Ascending aorta (tissue), 2 donors: ENCODE measurements at regions of chr5 and their contacts with region 1.

Region 1: GRCh38 chr5:173887610-173888472 is at the start of gene CPEB4:
- DNase-seq: peak; percentile 98 to 100
- H3K4me3 ChIP-seq: peak within 1 kb of the TSS; percentile 78 to 86
- H3K27ac ChIP-seq: peak within 1 kb of the TSS; percentile 86 to 90
- H3K4me1 ChIP-seq: no peaks in the 10 kb centered on the region
- H3K27me3 ChIP-seq: no peaks in the 10 kb centered on the region
- CTCF ChIP-seq: no peak
- total RNA-seq, gene CPEB4: 37.4 TPM

Region 2: GRCh38 chr5:173764321-173765029 is 123.4 kb before region 1 on chr5:
- intact Hi-C with region 1: loop called (anchors 2 kb)
- DNase-seq: peak; percentile 70 to 90
- H3K4me3 ChIP-seq: no peak overlapping the region
- H3K27ac ChIP-seq: peak overlapping the region; percentile 27 to 64
- H3K4me1 ChIP-seq: peaks cover 0 to 5% of the 10 kb centered on the region in 2 donors
- H3K27me3 ChIP-seq: no peaks in the 10 kb centered on the region
- CTCF ChIP-seq: no peak

Region 3: DNA sequence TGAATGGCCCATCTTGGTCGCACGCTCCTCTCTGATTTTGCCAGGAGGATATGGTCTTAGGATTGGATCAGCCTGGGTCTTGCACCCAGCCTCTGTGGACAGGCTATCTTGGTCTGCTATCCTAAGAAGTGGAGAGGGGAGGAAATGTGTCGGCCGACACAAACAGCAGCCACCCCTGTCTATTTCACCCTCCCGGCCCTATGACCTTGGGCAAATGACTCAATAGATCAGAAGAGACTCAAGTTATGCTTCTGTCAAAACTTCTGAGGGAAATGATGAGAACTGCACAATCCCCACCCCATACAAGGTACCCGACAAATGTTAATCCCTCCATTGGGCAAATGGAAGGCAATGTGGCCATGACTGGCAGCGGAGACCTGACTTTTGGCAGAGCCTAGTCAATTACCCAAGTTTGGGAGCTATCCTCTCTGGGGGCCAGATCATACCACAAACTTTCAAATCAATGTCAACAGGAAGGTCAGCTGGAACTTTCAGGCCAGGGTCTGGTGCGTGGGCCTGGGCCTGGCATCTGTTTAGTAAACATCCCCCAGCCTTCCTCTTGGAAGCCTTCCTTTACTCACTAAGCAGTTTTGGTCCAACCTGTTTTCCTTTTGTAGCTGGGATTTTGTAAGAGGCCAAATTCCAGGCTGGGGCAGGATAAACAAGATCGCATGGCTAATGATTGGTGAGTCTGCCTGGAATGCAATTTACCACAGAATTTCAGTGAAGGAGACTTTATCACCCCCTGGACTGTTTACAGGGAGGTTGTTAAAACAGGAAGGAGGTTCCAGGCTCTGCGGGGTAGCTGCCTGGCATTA is 63.9 kb before region 1 on chr5:
- intact Hi-C with region 1: loop called (anchors 5 kb)
- DNase-seq: no peak
- H3K4me3 ChIP-seq: no peak overlapping the region
- H3K27ac ChIP-seq: peak overlapping the region; percentile 61 to 70
- H3K4me1 ChIP-seq: peaks cover 3 to 14% of the 10 kb centered on the region in 2 donors
- H3K27me3 ChIP-seq: no peaks in the 10 kb centered on the region
- CTCF ChIP-seq: no peak

Region 4: DNA sequence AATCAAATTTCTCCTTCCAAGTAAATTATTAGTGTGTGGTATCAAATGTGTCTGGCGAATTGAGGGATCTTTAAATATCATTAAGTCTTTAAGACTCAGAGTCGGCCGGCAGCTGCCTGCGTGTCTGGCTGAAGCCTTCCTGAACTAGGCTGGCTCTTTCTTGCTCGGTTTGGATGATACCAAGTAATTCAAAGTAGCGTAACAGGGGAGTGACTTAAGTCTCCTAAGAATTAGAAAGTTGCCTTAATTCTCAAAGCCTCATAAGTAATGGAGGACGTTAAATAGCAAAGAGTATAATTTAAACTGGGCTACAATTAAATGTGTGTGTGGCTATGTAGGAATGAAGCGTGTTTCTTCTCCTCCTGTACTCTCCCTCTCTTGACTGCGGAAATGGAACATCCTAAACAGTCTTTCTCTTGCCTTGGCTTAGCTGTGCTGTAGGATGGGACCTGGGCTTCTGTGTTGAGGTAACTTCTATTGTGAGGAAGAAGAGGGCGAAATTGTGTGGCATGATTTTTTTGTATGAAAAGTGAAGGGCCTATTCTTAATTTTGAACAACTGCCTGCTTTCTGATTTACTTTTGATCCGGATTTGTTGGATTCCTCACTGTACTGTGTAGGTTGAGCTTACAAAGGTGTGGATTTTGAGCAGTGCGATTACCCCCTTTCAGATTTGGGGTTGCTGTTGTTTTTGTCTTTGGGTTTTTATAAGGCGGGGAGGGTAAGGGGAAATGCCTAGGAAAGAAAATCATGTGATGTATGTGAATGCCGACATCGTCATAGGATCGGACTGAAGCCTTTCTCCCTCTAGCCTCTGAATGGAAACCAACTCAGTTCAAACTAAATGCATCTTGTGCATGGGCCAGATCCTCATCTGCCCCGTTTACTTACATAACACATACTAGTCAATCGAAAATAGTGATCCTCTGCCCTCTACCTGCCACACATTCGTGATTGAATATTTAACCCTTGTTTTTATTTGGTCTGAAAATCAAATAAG is 30.2 kb after region 1 on chr5:
- intact Hi-C with region 1: loop called (anchors 2 kb)
- DNase-seq: no peak
- H3K4me3 ChIP-seq: peak overlapping the region; percentile 61 to 68
- H3K27ac ChIP-seq: peak overlapping the region; percentile 87 to 90
- H3K4me1 ChIP-seq: peaks cover 0 to 52% of the 10 kb centered on the region in 2 donors
- H3K27me3 ChIP-seq: no peaks in the 10 kb centered on the region
- CTCF ChIP-seq: no peak